CD8-positive, alpha-beta T cell (primary cell): ENCODE measurements at regions of chr19 and their contacts with region 1.

Region 1: GRCh38 chr19:29212648-29213573 is at the start of gene UQCRFS1:
- DNase-seq: peak; percentile 92 to 97 (median 95)
- ATAC-seq: peak; percentile 97
- H3K4me3 ChIP-seq: peak within 1 kb of the TSS; percentile 60 to 77
- H3K4me3 Mint-ChIP-seq: peak within 1 kb of the TSS; percentile 95
- H3K27ac ChIP-seq: peak within 1 kb of the TSS; percentile 80 to 89
- H3K27ac Mint-ChIP-seq: peak within 1 kb of the TSS; percentile 96
- H3K4me1 ChIP-seq: peaks cover 17% of the 10 kb centered on the region
- H3K4me1 Mint-ChIP-seq: peaks cover 46% of the 10 kb centered on the region
- H3K27me3 ChIP-seq: no peaks in the 10 kb centered on the region
- H3K27me3 Mint-ChIP-seq: peaks cover 6% of the 10 kb centered on the region
- CTCF ChIP-seq: no peak
- total RNA-seq, gene UQCRFS1: 31.5 to 31.8 TPM

Region 2: GRCh38 chr19:27793644-27794493 is 1419.0 kb before region 1 on chr19:
- CTCF ChIA-PET with region 1: no interaction called
- POLR2A ChIA-PET with region 1: no interaction called
- intact Hi-C with region 1: loop called (anchors 1 to 2 kb)
- DNase-seq: peak; percentile 77 to 95 (median 91)
- ATAC-seq: peak; percentile 90
- H3K4me3 ChIP-seq: peak overlapping the region; percentile 71 to 75
- H3K4me3 Mint-ChIP-seq: peak overlapping the region; percentile 93
- H3K27ac ChIP-seq: peak overlapping the region; percentile 74 to 81
- H3K27ac Mint-ChIP-seq: peak overlapping the region; percentile 95
- H3K4me1 ChIP-seq: peaks cover 18% of the 10 kb centered on the region
- H3K4me1 Mint-ChIP-seq: peaks cover 34% of the 10 kb centered on the region
- H3K27me3 ChIP-seq: no peaks in the 10 kb centered on the region
- H3K27me3 Mint-ChIP-seq: no peaks in the 10 kb centered on the region
- CTCF ChIP-seq: no peak

Region 3: GRCh38 chr19:29185427-29185826 is 27.5 kb before region 1 on chr19:
- CTCF ChIA-PET with region 1: no interaction called
- POLR2A ChIA-PET with region 1: no interaction called
- intact Hi-C with region 1: no loop called
- DNase-seq: no peak
- ATAC-seq: no peak
- H3K4me3 ChIP-seq: no peak overlapping the region
- H3K4me3 Mint-ChIP-seq: no peak overlapping the region
- H3K27ac ChIP-seq: no peak overlapping the region
- H3K27ac Mint-ChIP-seq: no peak overlapping the region
- H3K4me1 ChIP-seq: no peaks in the 10 kb centered on the region
- H3K4me1 Mint-ChIP-seq: no peaks in the 10 kb centered on the region
- H3K27me3 ChIP-seq: no peaks in the 10 kb centered on the region
- H3K27me3 Mint-ChIP-seq: peaks cover 2% of the 10 kb centered on the region
- CTCF ChIP-seq: no peak